Mammary epithelial cell (primary cell): ENCODE measurements at regions of chrX and their contacts with region 1.

Region 1: DNA sequence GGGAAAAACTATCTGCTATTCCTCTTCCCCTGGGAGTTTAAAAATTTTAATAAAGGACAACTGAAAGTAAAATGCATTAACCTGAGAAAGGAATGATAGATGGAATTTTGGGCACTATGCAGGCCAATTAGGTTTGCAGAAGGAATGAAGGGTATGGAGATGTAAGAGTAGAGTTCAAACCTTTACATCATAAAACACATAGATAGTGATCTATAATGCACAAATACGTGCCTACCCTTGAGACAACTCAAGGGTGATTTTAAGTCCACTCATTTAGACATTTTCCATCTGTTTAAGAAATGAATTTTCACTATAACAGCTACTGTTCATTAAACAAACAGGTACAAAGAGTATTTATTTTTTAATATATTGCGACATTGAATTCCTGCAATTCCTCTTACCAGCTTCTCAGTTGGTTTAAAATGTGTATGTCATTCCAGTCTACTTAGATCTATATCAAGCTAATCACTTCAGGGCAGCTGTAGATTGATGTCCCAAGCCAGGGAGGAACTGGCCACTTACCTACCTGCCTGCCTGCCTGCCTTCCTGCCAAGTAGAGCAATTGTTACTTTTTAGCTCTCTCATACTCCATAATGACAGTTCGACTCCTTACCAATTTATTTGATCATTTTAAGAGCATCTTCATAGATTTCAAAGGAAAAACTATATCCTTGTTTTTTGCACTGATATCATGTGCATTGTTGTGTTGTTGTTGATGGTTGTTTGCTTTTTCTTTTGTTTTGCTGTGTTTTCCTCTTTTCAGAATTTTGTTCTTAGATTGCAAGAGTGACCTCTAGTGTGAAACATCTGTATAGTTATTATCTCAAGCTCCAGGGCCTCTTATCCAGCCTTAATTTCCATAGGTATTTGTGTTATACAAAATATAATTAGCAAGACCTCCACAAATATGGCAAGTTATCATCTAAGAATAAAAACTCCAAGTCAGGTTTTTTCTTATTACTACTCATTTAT is 121.0 kb upstream of the NRK start:
- DNase-seq: peak; percentile 21
- H3K4me3 ChIP-seq: no peak overlapping the region
- H3K27ac ChIP-seq: no peak overlapping the region
- H3K4me1 ChIP-seq: peaks cover 7% of the 10 kb centered on the region
- H3K27me3 ChIP-seq: no peaks in the 10 kb centered on the region
- CTCF ChIP-seq: peak; percentile 13 to 44

Region 2: GRCh38 chrX:105323919-105324318 is 377.5 kb before region 1 on chrX:
- CTCF ChIA-PET with region 1: no interaction called
- dilution Hi-C with region 1: no loop called
- in situ Hi-C with region 1: no loop called
- intact Hi-C with region 1: loop called (anchors 1 kb)
- DNase-seq: peak; percentile 80
- H3K4me3 ChIP-seq: peak overlapping the region in 1 of 3 experiments; percentile 1
- H3K27ac ChIP-seq: peak overlapping the region; percentile 35
- H3K4me1 ChIP-seq: peaks cover 5% of the 10 kb centered on the region
- H3K27me3 ChIP-seq: no peaks in the 10 kb centered on the region
- CTCF ChIP-seq: no peak

Region 3: DNA sequence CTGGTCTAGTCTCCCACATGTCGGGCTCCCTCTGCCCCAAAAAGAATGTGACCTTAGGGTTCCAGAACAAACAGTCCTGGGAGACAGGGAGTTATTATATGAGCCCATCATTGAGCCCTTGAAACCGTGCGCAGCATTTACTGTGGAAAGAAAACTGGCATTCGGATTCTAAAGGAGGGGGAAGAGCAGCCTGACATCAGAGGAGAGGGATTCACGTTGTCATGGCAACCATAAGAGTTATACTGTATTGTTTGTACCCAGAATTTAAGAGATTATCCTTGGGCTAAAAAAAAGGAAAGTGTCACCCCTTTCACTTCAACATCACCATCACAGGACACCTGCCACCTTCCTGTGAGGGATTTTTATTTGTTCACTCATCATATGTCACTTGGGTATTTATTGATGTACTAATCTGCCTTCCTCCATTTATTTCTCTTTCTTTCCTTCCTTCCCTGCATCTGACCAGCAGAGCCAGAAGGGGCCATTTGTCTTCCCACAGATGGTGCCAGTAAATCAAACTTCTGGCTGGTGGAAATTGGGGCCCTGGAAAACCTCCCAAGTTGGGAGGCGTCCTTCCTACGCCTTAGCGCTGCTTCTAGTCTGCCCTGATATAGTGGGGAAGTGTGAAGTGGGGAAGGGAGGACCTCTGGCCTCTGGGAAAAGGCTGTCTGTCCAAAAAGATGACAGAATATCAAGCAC is 1683.2 kb after region 1 on chrX:
- CTCF ChIA-PET with region 1: no interaction called
- dilution Hi-C with region 1: no loop called
- in situ Hi-C with region 1: no loop called
- intact Hi-C with region 1: no loop called
- DNase-seq: no peak
- H3K4me3 ChIP-seq: no peak overlapping the region
- H3K27ac ChIP-seq: no peak overlapping the region
- H3K4me1 ChIP-seq: no peaks in the 10 kb centered on the region
- H3K27me3 ChIP-seq: peaks cover 4% of the 10 kb centered on the region
- CTCF ChIP-seq: no peak